Activated T-helper 1 cell treated with anti-CD3 and anti-CD28 coated beads, Interleukin-12 subunit alpha, Interleukin-12 subunit beta, Interleukin-2, Interleukin-4 antibody, amounts not matched to agents 30 ng/mL and 10 ng/mL and 1 ng/mL, durations not matched to agents 14 hours and 24 hours and 36 hours (primary cell): ENCODE measurements at regions of chr5 and their contacts with region 1.

Region 1: DNA sequence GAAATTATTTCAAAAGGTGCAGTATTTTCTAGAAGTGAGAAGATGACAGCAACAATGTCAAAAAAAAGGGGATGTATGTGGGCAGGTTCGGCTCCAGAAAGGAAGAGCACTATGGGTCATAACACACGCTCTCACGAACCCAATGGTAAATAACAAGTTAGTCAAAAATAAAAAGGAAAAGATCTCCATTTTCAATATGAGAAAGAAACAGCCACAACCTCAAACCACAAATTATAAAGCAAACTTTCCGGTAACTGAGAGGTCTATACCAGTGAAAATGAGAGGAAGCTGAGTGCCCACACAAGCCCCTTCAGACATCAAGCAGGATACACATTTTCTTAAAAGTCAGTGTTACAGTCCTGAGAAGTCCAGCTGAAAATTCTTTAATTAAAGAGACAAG is 398.5 kb upstream of the RPS23 start:
- DNase-seq: peak; percentile 27
- H3K4me3 Mint-ChIP-seq: peak overlapping the region; percentile 63
- H3K27ac Mint-ChIP-seq: peak overlapping the region; percentile 94
- H3K4me1 Mint-ChIP-seq: peaks cover 44% of the 10 kb centered on the region
- H3K27me3 Mint-ChIP-seq: no peaks in the 10 kb centered on the region

Region 2: GRCh38 chr5:82356808-82357671 is 319.6 kb before region 1 on chr5:
- intact Hi-C with region 1: loop called (anchors 1 kb)
- DNase-seq: peak; percentile 78
- H3K4me3 Mint-ChIP-seq: peak overlapping the region; percentile 70
- H3K27ac Mint-ChIP-seq: peak overlapping the region; percentile 97
- H3K4me1 Mint-ChIP-seq: peaks cover 87% of the 10 kb centered on the region
- H3K27me3 Mint-ChIP-seq: no peaks in the 10 kb centered on the region

Region 3: GRCh38 chr5:82466986-82467561 is 209.6 kb before region 1 on chr5:
- intact Hi-C with region 1: loop called (anchors 10 kb)
- DNase-seq: no peak
- H3K4me3 Mint-ChIP-seq: no peak overlapping the region
- H3K27ac Mint-ChIP-seq: no peak overlapping the region
- H3K4me1 Mint-ChIP-seq: no peaks in the 10 kb centered on the region
- H3K27me3 Mint-ChIP-seq: no peaks in the 10 kb centered on the region

Region 4: GRCh38 chr5:82597437-82597836 is 79.2 kb before region 1 on chr5:
- intact Hi-C with region 1: no loop called
- DNase-seq: no peak
- H3K4me3 Mint-ChIP-seq: no peak overlapping the region
- H3K27ac Mint-ChIP-seq: no peak overlapping the region
- H3K4me1 Mint-ChIP-seq: no peaks in the 10 kb centered on the region
- H3K27me3 Mint-ChIP-seq: peaks cover 4% of the 10 kb centered on the region

Region 5: DNA sequence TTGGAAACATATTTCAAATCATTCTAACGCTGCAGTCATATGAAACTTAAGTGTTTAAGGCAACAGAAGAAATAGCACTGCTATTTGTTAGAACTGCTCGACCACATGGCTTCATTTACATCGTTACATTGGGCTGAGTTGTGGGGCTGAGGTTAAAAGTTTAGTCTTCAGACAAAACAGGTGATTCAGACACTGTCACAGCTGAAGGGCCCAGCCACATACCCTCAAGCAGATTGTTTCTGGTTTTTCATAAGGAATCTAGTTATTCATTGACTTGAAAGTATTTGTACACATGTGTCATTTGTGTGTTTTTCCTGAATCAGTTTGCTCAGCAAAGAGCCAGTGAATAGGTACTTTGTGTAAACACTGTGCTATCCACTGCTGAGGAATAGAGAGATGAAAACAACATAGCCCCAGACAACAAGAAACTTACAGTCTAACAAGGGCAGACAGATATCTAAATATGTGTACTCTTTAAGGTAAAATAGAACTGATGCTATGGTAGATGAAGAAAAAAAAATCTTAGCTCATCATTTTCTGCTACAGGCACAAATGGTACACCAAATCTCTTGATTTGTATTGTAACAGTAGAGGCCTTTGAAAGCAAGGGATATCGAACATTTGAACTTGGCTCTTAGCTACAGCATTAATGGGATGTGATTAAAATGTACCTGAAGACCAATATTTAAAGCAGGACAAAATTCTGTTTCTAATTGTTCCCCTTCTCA is 40.9 kb before region 1 on chr5:
- intact Hi-C with region 1: loop called (anchors 1 kb)
- DNase-seq: no peak
- H3K4me3 Mint-ChIP-seq: no peak overlapping the region
- H3K27ac Mint-ChIP-seq: no peak overlapping the region
- H3K4me1 Mint-ChIP-seq: peaks cover 22% of the 10 kb centered on the region
- H3K27me3 Mint-ChIP-seq: no peaks in the 10 kb centered on the region

Region 6: GRCh38 chr5:83473346-83474163 is 796.9 kb after region 1 on chr5:
- intact Hi-C with region 1: loop called (anchors 10 kb)
- DNase-seq: peak; percentile 45
- H3K4me3 Mint-ChIP-seq: peak overlapping the region; percentile 86
- H3K27ac Mint-ChIP-seq: peak overlapping the region; percentile 78
- H3K4me1 Mint-ChIP-seq: peaks cover 33% of the 10 kb centered on the region
- H3K27me3 Mint-ChIP-seq: peaks cover 72% of the 10 kb centered on the region